ENCODE measurements at regions of chr17 and their contacts with region 1.

Region 1: DNA sequence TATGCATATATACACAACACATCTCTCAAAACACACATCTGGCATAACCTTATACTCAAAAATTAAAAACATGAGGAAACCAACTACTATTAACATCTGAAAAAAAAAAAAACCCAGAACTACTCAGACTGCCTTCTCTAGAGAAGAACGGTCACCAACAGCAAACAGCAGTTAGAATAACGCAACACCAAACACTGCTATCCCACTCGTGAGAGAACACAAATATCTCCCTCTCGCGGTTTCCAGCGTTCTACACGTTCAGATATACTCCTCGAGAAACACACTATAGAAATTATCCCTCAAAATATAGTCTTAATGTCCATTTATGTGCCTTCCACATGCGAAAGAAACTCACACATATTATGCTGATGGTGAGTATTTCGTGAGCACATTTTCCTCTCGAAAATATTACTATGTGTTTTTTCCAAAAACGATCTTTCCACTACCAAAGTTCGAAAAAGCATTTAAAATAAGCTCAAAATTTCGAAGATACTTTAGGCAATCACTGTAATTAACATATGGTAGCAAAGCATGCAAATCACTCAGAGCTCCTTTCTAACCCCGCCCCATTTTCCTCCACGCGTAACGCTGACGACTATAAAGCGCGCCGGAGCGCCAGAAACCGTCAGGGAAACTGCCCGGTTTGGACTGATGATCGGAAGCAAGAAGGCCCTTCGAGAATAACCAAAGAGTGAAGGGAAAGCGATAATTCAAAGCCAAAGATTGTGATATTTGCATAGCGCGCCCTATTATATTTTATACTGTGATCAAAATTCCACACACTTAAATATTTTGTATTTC is 60.1 kb downstream of the TEX14 start:
- DNase-seq: peak; percentile 99
- H3K4me3 ChIP-seq: peak overlapping the region; percentile 44
- H3K27ac ChIP-seq: peak overlapping the region; percentile 76
- H3K27me3 ChIP-seq: no peaks in the 10 kb centered on the region
- CTCF ChIP-seq: peak; percentile 45; the same call in 1 of the 2 replicates

Region 2: DNA sequence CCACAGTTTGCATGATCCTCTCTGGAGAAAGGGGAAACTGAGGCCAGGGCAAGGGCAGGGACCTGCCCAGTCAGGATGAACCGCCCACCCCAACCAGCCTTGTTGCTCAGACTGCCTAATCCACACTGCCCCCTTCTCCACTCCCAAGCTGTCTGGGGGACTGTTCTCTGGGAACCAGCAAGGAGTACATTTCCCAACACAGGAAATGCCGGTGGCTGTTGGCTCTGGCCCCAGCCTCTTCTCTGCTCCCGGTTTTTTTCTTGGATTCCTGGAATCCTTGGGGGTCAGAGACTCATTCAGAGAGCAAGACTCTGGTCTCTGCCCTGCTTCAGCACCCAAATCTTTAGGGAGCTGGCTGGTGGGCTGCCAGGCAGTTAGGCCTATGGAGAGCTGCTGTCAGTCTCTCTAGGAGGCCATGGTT is 106.5 kb before region 1 on chr17:
- CTCF ChIA-PET with region 1: interaction called, 3 read pairs
- POLR2A ChIA-PET with region 1: interaction called, 18 read pairs
- DNase-seq: peak; percentile 55
- H3K4me3 ChIP-seq: no peak overlapping the region
- H3K27ac ChIP-seq: peak overlapping the region; percentile 70
- H3K27me3 ChIP-seq: peaks cover 2% of the 10 kb centered on the region
- CTCF ChIP-seq: no peak

Region 3: DNA sequence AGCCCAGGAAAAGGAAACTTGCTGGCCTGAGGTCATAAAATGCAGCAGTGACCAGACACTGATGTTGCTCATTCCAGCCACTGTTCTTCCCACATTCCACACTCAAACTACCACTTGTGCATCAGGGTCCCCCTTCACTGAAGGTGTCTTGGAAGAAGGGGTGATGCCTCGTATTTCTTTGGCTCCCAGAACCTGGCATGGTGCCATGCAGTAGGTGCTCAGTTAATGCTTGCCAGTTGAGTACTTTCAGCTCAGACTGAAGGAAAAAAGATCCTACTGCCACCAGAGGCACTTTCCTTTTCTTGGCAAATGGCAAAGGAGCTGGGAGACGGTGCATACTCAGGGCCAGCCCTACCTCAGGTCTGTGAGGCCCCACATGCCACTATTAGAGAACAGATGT is 13.4 kb before region 1 on chr17:
- CTCF ChIA-PET with region 1: interaction called, 3 read pairs
- POLR2A ChIA-PET with region 1: interaction called, 11 read pairs
- DNase-seq: no peak
- H3K4me3 ChIP-seq: no peak overlapping the region
- H3K27ac ChIP-seq: no peak overlapping the region
- H3K27me3 ChIP-seq: peaks cover 12% of the 10 kb centered on the region
- CTCF ChIP-seq: no peak

Region 4: GRCh38 chr17:58658804-58659713 is 27.3 kb after region 1 on chr17:
- CTCF ChIA-PET with region 1: interaction called, 3 read pairs
- POLR2A ChIA-PET with region 1: interaction called, 86 read pairs
- DNase-seq: peak; percentile 99
- H3K4me3 ChIP-seq: peak overlapping the region; percentile 51
- H3K27ac ChIP-seq: peak overlapping the region; percentile 95
- H3K27me3 ChIP-seq: peaks cover 4% of the 10 kb centered on the region
- CTCF ChIP-seq: no peak

Measured in AG04450 (cell line).